Activated CD8-positive, alpha-beta T cell treated with anti-CD3 and anti-CD28 coated beads, Interleukin-2, amount 10 ng/mL, durations not matched to agents 7 days and 5 days (primary cell): ENCODE measurements at regions of chr19 and their contacts with region 1.

Region 1: DNA sequence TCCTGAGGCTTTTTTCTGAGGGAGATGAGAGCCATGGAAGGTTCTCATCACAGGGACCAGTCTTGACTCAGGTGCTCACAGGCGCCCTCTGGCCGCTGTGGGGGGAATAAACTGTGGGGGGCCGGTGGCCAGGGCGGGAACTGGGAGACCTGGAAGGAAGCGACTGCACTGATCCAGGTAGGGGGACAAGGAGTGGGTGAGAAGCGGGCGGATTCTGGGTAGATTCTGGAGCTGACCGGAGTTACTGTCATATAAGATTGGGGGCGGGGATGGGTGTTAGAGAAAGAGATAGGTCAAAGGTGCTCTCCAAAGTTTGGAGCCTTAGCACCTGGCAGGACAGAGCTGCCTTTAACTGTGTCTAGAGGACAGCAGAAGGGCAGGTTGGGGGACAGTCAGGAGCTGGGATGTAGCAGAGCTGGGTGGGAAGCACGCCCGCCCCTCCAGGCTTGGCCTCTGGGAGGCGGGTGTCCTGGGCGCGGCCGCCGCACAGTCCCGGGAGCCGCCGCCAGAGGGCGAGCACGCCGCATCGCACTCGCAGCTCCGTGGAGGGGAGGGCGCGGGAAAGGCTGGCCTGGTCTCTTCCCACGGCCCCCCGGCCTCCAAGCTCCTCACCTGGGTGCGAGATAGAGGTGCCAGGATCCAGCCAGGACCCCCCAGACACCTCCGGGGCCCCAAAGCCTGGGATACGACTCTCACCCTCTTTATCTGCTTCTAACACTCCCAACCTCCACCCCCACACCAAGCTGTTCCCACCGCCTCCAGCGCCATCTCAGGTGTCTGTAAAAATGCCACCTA is 4.2 kb upstream of the DAND5 start:
- DNase-seq: peak; percentile 86
- ATAC-seq: peak; percentile 98
- H3K4me3 Mint-ChIP-seq: peak overlapping the region; percentile 91
- H3K27ac Mint-ChIP-seq: peak overlapping the region; percentile 96
- H3K4me1 Mint-ChIP-seq: peaks cover 7% of the 10 kb centered on the region
- H3K27me3 Mint-ChIP-seq: no peaks in the 10 kb centered on the region

Region 2: DNA sequence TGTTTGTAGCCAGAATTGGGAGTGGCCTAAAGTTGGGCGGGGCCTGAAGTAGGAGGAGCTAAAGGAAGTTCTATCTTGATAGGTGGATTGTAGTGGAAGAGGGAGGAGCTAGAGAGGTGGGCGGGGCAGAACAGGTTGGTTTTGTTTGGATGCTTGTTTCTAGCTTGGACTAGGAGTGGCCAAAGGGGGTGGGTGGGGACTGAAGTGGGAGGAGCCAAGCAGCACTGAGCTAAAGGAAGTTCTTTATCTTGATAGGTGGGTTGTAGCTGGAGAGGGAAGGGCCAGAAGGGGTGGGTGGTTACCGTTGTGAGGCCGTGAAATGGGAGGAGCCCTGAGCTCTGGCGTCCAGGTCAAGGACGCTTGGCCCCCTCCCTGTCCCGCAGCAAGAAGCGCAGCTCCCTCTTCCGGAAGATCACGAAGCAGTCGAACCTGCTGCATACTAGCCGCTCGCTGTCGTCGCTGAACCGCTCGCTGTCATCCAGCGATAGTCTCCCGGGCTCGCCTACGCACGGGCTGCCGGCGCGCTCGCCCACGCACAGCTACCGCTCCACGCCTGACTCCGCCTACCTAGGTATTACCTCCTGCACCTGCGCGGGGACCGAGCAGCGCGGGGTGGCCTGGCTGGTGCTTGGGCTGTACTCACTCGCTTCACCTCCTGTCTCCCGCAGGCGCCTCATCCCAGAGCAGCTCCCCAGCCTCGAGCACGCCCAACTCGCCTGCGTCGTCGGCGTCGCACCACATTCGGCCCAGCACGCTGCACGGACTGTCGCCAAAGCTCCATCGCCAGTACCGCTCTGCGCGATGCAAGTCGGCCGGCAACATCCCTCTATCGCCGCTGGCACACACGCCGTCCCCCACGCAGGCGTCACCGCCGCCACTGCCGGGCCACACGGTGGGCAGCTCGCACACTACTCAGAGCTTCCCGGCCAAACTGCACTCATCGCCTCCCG is 92.0 kb before region 1 on chr19:
- CTCF ChIA-PET with region 1: interaction called, 11 read pairs
- POLR2A ChIA-PET with region 1: no interaction called
- DNase-seq: peak; percentile 76
- ATAC-seq: peak; percentile 80
- H3K4me3 Mint-ChIP-seq: no peak overlapping the region
- H3K27ac Mint-ChIP-seq: no peak overlapping the region
- H3K4me1 Mint-ChIP-seq: peaks cover 4% of the 10 kb centered on the region
- H3K27me3 Mint-ChIP-seq: no peaks in the 10 kb centered on the region

Region 3: DNA sequence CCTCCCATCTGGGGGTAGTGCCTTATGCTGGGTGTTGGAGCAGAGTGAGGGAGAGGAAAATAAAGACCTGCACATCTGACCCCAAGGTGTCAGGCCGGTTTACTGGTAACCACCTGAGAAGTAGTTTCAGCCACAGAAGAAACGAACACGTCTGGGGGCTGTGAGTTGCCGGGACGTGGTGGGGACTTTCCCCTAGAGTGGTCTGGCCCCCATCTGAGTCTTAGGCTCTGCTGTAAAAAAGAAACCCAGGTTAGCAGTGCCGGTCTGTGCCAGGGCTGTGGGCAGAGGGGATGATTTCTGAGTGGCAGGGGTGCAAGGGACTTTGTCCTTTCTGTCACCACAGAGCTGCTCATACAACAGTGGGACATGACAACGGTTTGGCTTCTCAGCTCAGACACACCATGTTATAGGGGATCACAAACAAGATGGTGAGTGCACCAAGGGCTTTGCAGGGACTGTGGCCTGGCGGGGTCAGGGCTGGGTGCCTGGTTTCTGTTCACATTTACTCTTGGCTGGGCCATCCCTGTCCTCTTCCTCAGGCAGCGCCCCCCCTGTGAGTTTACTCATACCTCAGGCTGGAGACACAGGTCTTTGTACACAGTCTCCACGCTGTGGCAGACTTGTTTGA is 65.2 kb before region 1 on chr19:
- CTCF ChIA-PET with region 1: interaction called, 16 read pairs
- POLR2A ChIA-PET with region 1: no interaction called
- DNase-seq: peak; percentile 41
- ATAC-seq: peak; percentile 72
- H3K4me3 Mint-ChIP-seq: no peak overlapping the region
- H3K27ac Mint-ChIP-seq: peak overlapping the region; percentile 64
- H3K4me1 Mint-ChIP-seq: peaks cover 22% of the 10 kb centered on the region
- H3K27me3 Mint-ChIP-seq: no peaks in the 10 kb centered on the region

Region 4: GRCh38 chr19:12947702-12948584 is 17.3 kb before region 1 on chr19:
- CTCF ChIA-PET with region 1: interaction called, 53 read pairs
- POLR2A ChIA-PET with region 1: interaction called, 4 read pairs
- DNase-seq: no peak
- ATAC-seq: no peak
- H3K4me3 Mint-ChIP-seq: no peak overlapping the region
- H3K27ac Mint-ChIP-seq: peak overlapping the region; percentile 54
- H3K4me1 Mint-ChIP-seq: peaks cover 71% of the 10 kb centered on the region
- H3K27me3 Mint-ChIP-seq: no peaks in the 10 kb centered on the region

Region 5: GRCh38 chr19:13044231-13044836 is 79.1 kb after region 1 on chr19:
- CTCF ChIA-PET with region 1: interaction called, 18 read pairs
- POLR2A ChIA-PET with region 1: no interaction called
- DNase-seq: peak; percentile 39
- ATAC-seq: peak; percentile 68
- H3K4me3 Mint-ChIP-seq: no peak overlapping the region
- H3K27ac Mint-ChIP-seq: peak overlapping the region; percentile 52
- H3K4me1 Mint-ChIP-seq: peaks cover 24% of the 10 kb centered on the region
- H3K27me3 Mint-ChIP-seq: peaks cover 3% of the 10 kb centered on the region

Region 6: GRCh38 chr19:13069415-13070359 is 104.5 kb after region 1 on chr19:
- CTCF ChIA-PET with region 1: interaction called, 17 read pairs
- POLR2A ChIA-PET with region 1: no interaction called
- DNase-seq: no peak
- ATAC-seq: no peak
- H3K4me3 Mint-ChIP-seq: no peak overlapping the region
- H3K27ac Mint-ChIP-seq: no peak overlapping the region
- H3K4me1 Mint-ChIP-seq: no peaks in the 10 kb centered on the region
- H3K27me3 Mint-ChIP-seq: no peaks in the 10 kb centered on the region

Region 7: DNA sequence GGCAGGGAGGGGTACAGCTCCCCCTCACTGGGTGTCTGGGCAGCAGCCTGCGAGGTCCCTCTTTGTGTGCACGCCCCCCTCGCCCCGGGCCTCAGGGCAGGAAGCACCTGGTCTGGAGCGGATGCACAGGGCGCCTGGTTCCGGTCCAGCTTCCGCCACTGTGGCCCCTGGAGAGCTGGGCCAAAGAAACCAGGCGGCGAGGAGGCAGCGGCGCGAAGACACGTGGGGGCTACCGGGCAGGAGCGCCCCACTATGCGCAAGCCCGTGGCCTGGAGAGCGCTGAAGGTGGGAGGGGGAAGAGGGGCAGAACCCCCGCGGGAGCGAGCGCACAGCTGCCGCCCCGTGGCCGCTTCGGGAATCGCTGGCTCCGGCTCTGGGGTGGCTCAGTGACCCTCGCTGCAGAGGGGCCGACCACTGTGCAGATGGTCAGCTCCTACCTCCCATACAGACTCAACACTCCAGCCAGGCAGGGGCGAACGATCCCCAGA is 139.2 kb after region 1 on chr19:
- CTCF ChIA-PET with region 1: interaction called, 13 read pairs
- POLR2A ChIA-PET with region 1: no interaction called
- DNase-seq: peak; percentile 75
- ATAC-seq: peak; percentile 55
- H3K4me3 Mint-ChIP-seq: peak overlapping the region; percentile 80
- H3K27ac Mint-ChIP-seq: peak overlapping the region; percentile 86
- H3K4me1 Mint-ChIP-seq: peaks cover 36% of the 10 kb centered on the region
- H3K27me3 Mint-ChIP-seq: no peaks in the 10 kb centered on the region